Endothelial cell of umbilical vein (primary cell): ENCODE measurements at regions of chr4 and their contacts with region 1.

Region 1: DNA sequence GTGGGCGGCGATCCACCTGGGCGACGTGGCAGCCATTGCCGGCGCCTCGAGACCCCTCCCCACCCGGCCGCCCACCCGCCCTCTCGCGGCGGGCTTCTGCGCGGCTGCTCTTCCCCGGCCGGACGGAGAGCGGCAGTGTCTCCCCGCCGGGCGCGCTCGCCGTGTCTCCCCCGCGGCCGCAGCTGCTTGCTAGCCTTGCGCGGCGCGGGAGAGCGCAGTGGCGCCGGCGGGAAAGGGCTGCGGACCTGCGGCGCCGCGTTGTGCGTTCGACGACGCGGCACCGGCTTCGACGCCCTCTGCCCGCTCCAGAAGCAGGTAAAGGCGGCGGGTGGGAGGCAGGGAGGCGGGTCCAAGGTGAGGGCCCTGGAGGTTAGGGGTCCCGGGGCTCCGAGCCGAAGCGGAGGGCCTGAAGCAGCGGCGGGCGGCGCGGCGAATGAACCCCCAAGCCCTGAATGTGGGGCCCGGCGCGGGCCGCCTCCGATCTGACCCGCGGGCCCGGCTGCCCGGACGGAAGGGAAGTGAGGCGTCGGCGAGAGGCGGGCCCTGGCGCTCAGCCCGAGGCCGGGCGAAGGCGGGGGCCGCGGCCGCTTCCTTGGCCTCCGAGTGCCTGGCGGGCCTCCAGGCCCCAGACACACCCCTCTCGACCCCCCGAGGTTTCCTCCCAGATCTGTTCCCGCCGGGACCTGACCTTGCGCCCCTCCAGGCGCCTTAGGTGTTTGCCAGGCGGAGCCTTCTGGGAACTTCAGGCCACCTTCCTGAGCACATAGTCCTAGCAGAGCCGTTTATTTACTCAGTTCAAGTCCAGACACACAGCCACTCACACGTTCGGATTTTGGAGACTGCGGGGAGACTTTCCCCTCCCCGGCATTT is at the start of gene N4BP2:
- DNase-seq: peak; percentile 88
- H3K4me3 ChIP-seq: peak within 1 kb of the TSS; percentile 81 to 99 (median 89)
- H3K27ac ChIP-seq: peak within 1 kb of the TSS; percentile 99
- H3K4me1 ChIP-seq: peaks cover 12% of the 10 kb centered on the region
- H3K27me3 ChIP-seq: no peaks in the 10 kb centered on the region
- CTCF ChIP-seq: peak; percentile 36 to 71
- POLR2A ChIP-seq: peak; percentile 96
- total RNA-seq, gene N4BP2: 6.9 and 7.1 TPM in 2 replicates

Region 2: GRCh38 chr4:39469429-39470077 is 587.4 kb before region 1 on chr4:
- CTCF ChIA-PET with region 1: interaction called, 7 read pairs
- POLR2A ChIA-PET with region 1: no interaction called
- dilution Hi-C with region 1: no loop called
- intact Hi-C with region 1: loop called (anchors 1 kb)
- DNase-seq: peak; percentile 92
- H3K4me3 ChIP-seq: no peak overlapping the region
- H3K27ac ChIP-seq: peak overlapping the region; percentile 26
- H3K4me1 ChIP-seq: peaks cover 3% of the 10 kb centered on the region
- H3K27me3 ChIP-seq: no peaks in the 10 kb centered on the region
- CTCF ChIP-seq: peak; percentile 77 to 84
- POLR2A ChIP-seq: no peak

Region 3: GRCh38 chr4:39697740-39698423 is 359.1 kb before region 1 on chr4 and contains the start of gene UBE2K:
- CTCF ChIA-PET with region 1: no interaction called
- POLR2A ChIA-PET with region 1: no interaction called
- dilution Hi-C with region 1: no loop called
- intact Hi-C with region 1: loop called (anchors 5 kb)
- DNase-seq: peak; percentile 81
- H3K4me3 ChIP-seq: peak within 1 kb of the TSS; percentile 39 to 97 (median 90)
- H3K27ac ChIP-seq: peak within 1 kb of the TSS; percentile 80
- H3K4me1 ChIP-seq: peaks cover 21% of the 10 kb centered on the region
- H3K27me3 ChIP-seq: no peaks in the 10 kb centered on the region
- CTCF ChIP-seq: no peak
- POLR2A ChIP-seq: peak; percentile 84
- total RNA-seq, gene UBE2K: 90.3 and 97.8 TPM in 2 replicates

Region 4: DNA sequence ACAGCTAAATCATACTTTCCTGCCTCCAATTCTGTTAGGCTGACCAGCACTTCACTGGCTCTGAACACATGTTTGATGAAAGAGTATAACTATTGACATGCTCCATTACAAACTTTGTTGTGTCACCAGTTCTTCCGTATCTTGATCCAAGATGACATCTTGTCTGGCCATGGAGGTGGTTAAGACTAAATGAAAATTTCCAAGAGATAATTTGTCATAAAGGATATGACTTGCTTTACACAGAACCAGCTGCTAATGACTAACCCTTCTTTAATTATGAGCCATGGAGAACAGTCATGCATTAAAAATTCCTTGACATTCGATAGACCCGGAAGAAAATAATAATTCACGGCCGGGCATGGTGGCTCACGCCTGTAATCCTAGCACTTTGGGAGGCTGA is 18.0 kb before region 1 on chr4:
- CTCF ChIA-PET with region 1: interaction called, 4 read pairs
- POLR2A ChIA-PET with region 1: no interaction called
- dilution Hi-C with region 1: no loop called
- intact Hi-C with region 1: loop called (anchors 2 kb)
- DNase-seq: peak; percentile 43
- H3K4me3 ChIP-seq: no peak overlapping the region
- H3K27ac ChIP-seq: peak overlapping the region; percentile 2
- H3K4me1 ChIP-seq: peaks cover 3% of the 10 kb centered on the region
- H3K27me3 ChIP-seq: no peaks in the 10 kb centered on the region
- CTCF ChIP-seq: no peak
- POLR2A ChIP-seq: no peak

Region 5: GRCh38 chr4:40121515-40121914 is 64.6 kb after region 1 on chr4:
- CTCF ChIA-PET with region 1: interaction called, 3 read pairs
- POLR2A ChIA-PET with region 1: no interaction called
- dilution Hi-C with region 1: no loop called
- intact Hi-C with region 1: loop called (anchors 1 kb)
- DNase-seq: peak; percentile 93
- H3K4me3 ChIP-seq: no peak overlapping the region
- H3K27ac ChIP-seq: peak overlapping the region; percentile 82
- H3K4me1 ChIP-seq: peaks cover 18% of the 10 kb centered on the region
- H3K27me3 ChIP-seq: no peaks in the 10 kb centered on the region
- CTCF ChIP-seq: no peak
- POLR2A ChIP-seq: no peak

Region 6: DNA sequence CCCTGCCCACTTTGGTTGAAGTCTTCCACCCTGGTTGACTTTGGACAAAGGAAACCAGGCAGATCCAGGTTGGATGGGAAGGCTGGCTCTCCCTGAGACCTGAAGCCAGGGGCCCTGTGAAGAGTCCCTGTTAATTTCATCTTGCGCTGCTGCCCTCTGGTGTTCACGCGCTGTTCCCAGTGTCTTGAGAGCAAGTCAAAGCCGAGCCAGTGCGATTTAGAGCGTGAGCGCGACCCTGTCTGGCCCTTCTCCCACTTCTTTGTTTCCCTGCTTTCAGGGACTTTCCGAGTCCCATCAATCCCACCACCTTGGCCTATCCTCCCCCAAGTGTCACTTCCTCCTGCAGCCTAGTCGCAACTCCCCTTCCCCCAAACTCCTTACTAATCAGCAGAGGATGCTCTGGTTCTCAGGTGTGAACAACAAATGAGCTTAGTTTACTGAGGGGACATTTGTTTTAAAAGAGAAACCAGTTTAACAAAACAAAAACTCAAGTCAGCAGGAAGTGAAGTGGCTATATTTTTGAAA is 252.4 kb after region 1 on chr4:
- CTCF ChIA-PET with region 1: interaction called, 16 read pairs
- POLR2A ChIA-PET with region 1: no interaction called
- dilution Hi-C with region 1: no loop called
- intact Hi-C with region 1: loop called (anchors 1 kb)
- DNase-seq: peak; percentile 86
- H3K4me3 ChIP-seq: no peak overlapping the region
- H3K27ac ChIP-seq: no peak overlapping the region
- H3K4me1 ChIP-seq: peaks cover 11% of the 10 kb centered on the region
- H3K27me3 ChIP-seq: no peaks in the 10 kb centered on the region
- CTCF ChIP-seq: peak; percentile 90 to 95
- POLR2A ChIP-seq: no peak

Region 7: DNA sequence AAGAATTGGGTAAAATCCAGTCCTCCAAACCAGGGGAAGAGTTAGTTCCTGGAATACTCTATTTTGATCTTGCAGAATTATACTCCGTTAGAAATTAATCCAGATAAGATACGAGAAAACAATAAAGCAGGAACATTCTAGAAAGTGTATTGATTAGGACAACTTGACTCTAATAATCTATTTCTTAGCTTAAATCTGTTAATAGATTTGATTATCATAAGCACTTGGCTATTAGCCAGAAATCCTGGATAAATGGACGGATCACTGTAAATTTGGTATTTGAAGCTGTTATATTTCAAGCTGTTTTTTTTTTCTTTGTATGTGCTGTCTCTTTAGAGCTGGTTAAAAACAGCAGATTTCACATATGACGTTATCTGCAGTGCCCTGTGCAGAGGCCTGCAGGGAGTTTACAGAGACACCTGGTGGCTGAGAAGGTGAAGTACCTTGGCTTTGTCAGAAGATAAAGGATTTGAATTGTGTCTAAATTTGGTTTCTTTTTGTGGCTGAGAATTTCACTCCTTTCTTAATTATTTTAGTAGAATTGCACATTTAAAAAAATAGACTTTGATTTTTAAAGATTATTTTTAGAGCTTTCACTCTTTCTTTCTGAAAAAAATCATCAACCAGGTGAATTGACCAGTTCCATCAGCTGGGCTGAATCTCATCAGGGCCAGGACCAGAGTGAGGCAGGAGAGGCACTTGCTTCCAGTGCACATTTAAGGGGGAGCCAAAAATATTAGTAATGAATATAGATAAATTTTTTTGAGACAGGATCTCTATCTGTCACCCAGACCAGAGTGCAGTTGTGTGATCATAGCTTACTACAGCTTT is 268.5 kb after region 1 on chr4:
- CTCF ChIA-PET with region 1: interaction called, 19 read pairs
- POLR2A ChIA-PET with region 1: no interaction called
- dilution Hi-C with region 1: no loop called
- intact Hi-C with region 1: loop called (anchors 1 kb)
- DNase-seq: peak; percentile 73
- H3K4me3 ChIP-seq: no peak overlapping the region
- H3K27ac ChIP-seq: no peak overlapping the region
- H3K4me1 ChIP-seq: no peaks in the 10 kb centered on the region
- H3K27me3 ChIP-seq: peaks cover 4 to 5% of the 10 kb centered on the region in 2 experiments
- CTCF ChIP-seq: peak; percentile 74 to 80
- POLR2A ChIP-seq: no peak

Region 8: DNA sequence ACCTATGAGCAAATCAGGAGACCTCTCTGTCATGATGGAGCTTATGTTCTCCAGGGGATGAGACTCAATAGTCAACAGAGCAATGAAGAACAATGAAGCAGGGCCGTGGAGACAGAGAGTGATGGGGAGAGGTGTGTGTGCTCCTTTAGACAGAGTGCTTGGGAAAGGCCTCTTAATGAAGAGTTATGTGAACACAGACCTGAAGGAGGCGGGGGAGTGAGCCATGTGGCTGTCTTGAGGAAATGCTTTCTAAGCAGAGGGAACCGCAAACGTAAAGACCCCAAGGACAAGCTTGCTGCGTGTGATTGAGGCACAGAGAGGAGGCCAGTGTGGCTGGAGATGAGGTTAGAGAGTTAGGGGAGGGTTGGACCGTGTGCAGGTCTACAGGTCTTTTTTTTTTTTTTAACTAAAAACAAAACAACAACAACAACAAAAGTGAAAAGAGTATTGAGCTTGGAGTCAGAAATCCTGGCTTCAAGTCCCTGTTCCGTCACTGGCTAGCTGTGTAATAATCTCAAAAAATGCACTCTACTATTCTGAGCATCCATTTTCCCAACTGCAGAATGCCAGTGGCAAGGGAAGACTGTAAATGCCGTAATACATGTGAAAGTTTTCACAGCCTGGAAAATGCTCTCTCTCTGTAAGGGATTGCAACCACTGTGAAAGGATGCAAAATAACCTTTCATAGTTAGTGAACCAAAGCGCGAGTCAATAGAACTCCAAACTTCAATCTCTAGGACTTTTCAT is 331.5 kb after region 1 on chr4:
- CTCF ChIA-PET with region 1: no interaction called
- POLR2A ChIA-PET with region 1: no interaction called
- dilution Hi-C with region 1: no loop called
- intact Hi-C with region 1: no loop called
- DNase-seq: no peak
- H3K4me3 ChIP-seq: no peak overlapping the region
- H3K27ac ChIP-seq: no peak overlapping the region
- H3K4me1 ChIP-seq: no peaks in the 10 kb centered on the region
- H3K27me3 ChIP-seq: peaks cover 2 to 4% of the 10 kb centered on the region in 2 experiments
- CTCF ChIP-seq: no peak
- POLR2A ChIP-seq: no peak